Natural killer cell (primary cell): ENCODE measurements at regions of chr6 and their contacts with region 1.

Region 1: DNA sequence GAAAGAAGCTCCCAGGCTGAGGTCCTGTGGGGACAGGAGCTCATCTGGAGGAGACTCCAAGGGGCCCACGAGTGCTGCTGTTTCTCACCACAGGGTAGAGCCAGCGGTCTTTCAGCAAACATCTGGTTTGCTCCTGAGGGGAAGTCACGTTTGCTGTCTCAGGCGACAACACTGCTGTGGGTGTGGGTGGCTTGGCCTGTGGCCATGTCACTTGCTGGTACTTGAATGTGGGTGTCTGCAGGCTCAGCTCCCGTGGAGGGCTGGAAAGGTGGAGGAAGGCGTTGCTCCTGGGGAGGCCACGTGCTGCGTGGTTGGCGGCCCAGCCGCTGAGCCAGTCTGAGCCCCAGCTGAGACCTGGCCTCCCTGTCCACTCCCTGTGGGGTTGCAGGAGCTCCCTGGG is 52.8 kb upstream of the MPC1 start:
- DNase-seq: peak; percentile 49 to 77
- ATAC-seq: peak; percentile 81 to 90 (median 84)
- H3K4me3 ChIP-seq: no peak overlapping the region
- H3K4me3 Mint-ChIP-seq: peak overlapping the region; percentile 28
- H3K27ac ChIP-seq: no peak overlapping the region
- H3K27ac Mint-ChIP-seq: peak overlapping the region in 1 of 2 donors; percentile 64
- H3K4me1 ChIP-seq: peaks cover 22% of the 10 kb centered on the region
- H3K4me1 Mint-ChIP-seq: peaks cover 28 to 29% of the 10 kb centered on the region in 2 donors
- H3K27me3 ChIP-seq: peaks cover 3% of the 10 kb centered on the region
- H3K27me3 Mint-ChIP-seq: peaks cover 16 to 25% of the 10 kb centered on the region in 2 donors
- CTCF ChIP-seq: peak; percentile 30

Region 2: DNA sequence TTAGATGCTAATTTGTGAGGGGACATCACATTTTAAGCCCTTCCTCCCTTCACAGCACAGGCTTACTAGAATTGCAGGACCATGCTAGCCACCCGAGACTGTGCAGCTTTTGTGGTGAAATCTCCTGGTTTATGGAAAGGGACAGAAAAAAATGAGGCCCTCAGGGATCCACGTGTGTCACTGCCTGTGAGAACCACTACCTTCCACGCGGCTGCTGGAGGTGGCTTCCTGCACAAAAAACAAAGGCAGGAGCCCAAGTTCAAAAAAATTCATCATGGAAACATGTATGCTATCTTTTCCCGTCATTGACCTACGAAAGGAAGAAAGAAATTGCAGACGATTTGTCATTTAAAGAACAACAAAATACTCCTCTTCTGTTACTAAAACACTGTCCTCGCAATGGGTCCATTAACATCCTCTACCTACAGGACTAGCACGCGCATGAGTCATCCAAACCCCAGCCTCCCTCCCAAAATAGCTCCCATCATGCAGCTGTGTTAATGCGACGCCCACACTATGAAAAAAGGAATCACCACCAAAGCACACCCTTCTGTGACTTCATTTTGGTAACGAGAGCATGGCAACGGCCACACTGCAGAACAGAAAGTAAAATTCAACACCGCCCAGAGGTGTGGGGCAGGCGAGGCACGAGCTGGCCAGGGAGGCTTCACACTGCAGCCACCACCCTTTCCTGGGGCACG is 105.2 kb after region 1 on chr6:
- intact Hi-C with region 1: loop called (anchors 10 kb)
- DNase-seq: peak; percentile 48 to 83
- ATAC-seq: peak; percentile 91 to 95 (median 94)
- H3K4me3 ChIP-seq: peak overlapping the region; percentile 2
- H3K4me3 Mint-ChIP-seq: peak overlapping the region; percentile 76
- H3K27ac ChIP-seq: peak overlapping the region; percentile 76
- H3K27ac Mint-ChIP-seq: peak overlapping the region; percentile 75 to 84
- H3K4me1 ChIP-seq: peaks cover 34% of the 10 kb centered on the region
- H3K4me1 Mint-ChIP-seq: peaks cover 39 to 40% of the 10 kb centered on the region in 2 donors
- H3K27me3 ChIP-seq: no peaks in the 10 kb centered on the region
- H3K27me3 Mint-ChIP-seq: peaks cover 0 to 3% of the 10 kb centered on the region in 2 donors
- CTCF ChIP-seq: no peak